CD14-positive monocyte (primary cell): ENCODE measurements at regions of chr6 and their contacts with region 1.

Region 1: GRCh38 chr6:132715204-132715603 is 1.3 kb upstream of the VNN1 start:
- DNase-seq: peak in 2 of 3 donors; percentile 9 to 17
- H3K4me3 ChIP-seq: no peak overlapping the region
- H3K4me3 Mint-ChIP-seq: no peak overlapping the region
- H3K27ac ChIP-seq: peak overlapping the region in 1 of 2 donors; percentile 40
- H3K27ac Mint-ChIP-seq: peak overlapping the region; percentile 60 to 98 (median 77)
- H3K4me1 ChIP-seq: peaks cover 51 to 57% of the 10 kb centered on the region in 2 donors
- H3K4me1 Mint-ChIP-seq: peaks cover 53% of the 10 kb centered on the region
- H3K27me3 ChIP-seq: no peaks in the 10 kb centered on the region
- H3K27me3 Mint-ChIP-seq: peaks cover 0 to 6% (median 2%) of the 10 kb centered on the region in 3 donors
- CTCF ChIP-seq: no peak

Region 2: DNA sequence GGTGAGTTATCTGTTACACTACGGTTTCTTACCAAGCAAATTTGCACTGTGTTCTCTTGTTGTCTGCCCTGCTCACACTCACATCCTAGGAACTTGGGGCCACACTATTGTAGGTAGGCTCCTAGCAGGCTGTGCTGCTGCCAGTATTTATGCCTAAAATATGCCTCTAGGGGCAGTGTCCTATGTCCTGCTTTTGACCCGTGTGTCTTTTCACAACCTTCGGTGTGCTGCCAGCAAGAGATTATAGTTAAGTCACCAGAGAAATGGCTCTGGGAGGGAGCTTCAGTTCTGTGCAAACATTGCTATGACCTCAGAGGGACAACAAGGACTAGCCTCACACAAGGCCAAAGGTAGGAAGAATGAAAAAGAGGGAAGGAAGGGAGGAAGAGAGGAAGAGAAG is 116.7 kb before region 1 on chr6:
- intact Hi-C with region 1: no loop called
- DNase-seq: peak; percentile 3 to 17 (median 6)
- H3K4me3 ChIP-seq: no peak overlapping the region
- H3K4me3 Mint-ChIP-seq: no peak overlapping the region
- H3K27ac ChIP-seq: no peak overlapping the region
- H3K27ac Mint-ChIP-seq: no peak overlapping the region
- H3K4me1 ChIP-seq: peaks cover 0 to under 1% of the 10 kb centered on the region in 2 donors
- H3K4me1 Mint-ChIP-seq: peaks cover 5% of the 10 kb centered on the region
- H3K27me3 ChIP-seq: no peaks in the 10 kb centered on the region
- H3K27me3 Mint-ChIP-seq: peaks cover 1 to 2% (median 1%) of the 10 kb centered on the region in 3 donors
- CTCF ChIP-seq: peak; percentile 45

Region 3: GRCh38 chr6:132675749-132676148 is 39.5 kb before region 1 on chr6:
- intact Hi-C with region 1: loop called in 1 of 2 experiments (anchors 5 kb)
- DNase-seq: peak; percentile 60 to 72 (median 67)
- H3K4me3 ChIP-seq: peak overlapping the region in 1 of 3 experiments; percentile 4
- H3K4me3 Mint-ChIP-seq: no peak overlapping the region
- H3K27ac ChIP-seq: peak overlapping the region in 1 of 2 donors; percentile 6
- H3K27ac Mint-ChIP-seq: peak overlapping the region in 3 of 7 donors; percentile 10 to 17 (median 12)
- H3K4me1 ChIP-seq: peaks cover 23 to 33% of the 10 kb centered on the region in 2 donors
- H3K4me1 Mint-ChIP-seq: peaks cover 32% of the 10 kb centered on the region
- H3K27me3 ChIP-seq: no peaks in the 10 kb centered on the region
- H3K27me3 Mint-ChIP-seq: peaks cover 0 to 1% (median 0%) of the 10 kb centered on the region in 3 donors
- CTCF ChIP-seq: no peak

Region 4: DNA sequence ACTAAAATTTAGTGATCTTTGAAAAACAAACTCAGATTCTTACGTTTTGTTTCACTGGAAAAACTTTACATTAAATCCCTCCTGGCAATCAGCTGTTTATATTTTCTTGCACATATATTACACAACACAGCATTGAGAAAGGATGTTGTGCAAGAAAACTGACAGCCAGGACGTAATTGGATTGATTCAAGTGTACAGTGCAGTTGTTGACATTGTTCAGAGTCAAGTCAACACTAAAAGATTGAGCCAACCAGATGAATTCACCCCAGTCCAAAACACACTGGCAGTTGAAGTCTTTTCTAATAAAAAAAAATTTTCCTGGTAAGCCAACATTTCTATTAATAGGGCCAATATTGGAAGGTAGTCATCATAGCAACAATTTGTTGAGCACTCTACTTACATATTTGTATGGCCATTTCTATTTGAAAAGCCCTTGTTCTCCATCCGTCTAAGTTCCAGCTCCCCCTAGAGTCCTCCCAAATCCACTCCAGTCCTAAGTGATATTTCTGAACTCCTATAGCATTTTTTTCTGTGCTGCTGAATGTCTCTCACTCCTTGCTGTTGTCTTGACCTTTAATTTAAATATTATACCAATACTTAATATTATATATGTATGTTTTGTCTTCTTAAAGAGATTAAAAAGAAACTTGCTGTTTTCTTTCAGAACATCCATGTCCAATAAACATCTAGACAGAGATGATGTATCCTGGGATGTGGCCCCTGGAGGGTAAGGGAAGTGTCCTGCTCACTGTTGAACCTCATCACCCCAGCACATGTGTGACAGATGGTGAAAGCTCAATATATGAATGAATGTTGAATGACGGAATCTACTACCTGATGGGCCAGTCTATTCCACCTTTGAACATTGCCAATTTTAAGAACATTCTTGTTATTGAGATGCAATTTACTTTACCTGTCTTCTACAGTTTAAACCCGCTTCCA is 19.8 kb after region 1 on chr6:
- intact Hi-C with region 1: loop called in 1 of 2 experiments (anchors 2 kb)
- DNase-seq: peak; percentile 75 to 83 (median 82)
- H3K4me3 ChIP-seq: peak overlapping the region; percentile 42 to 72 (median 44)
- H3K4me3 Mint-ChIP-seq: peak overlapping the region in 1 of 2 donors; percentile 81
- H3K27ac ChIP-seq: peak overlapping the region; percentile 46 to 89
- H3K27ac Mint-ChIP-seq: peak overlapping the region; percentile 20 to 95 (median 90)
- H3K4me1 ChIP-seq: peaks cover 56 to 80% of the 10 kb centered on the region in 2 donors
- H3K4me1 Mint-ChIP-seq: peaks cover 62% of the 10 kb centered on the region
- H3K27me3 ChIP-seq: no peaks in the 10 kb centered on the region
- H3K27me3 Mint-ChIP-seq: peaks cover 0 to 2% (median 0%) of the 10 kb centered on the region in 3 donors
- CTCF ChIP-seq: no peak

Region 5: GRCh38 chr6:132749111-132749510 is 33.9 kb after region 1 on chr6:
- intact Hi-C with region 1: loop called in 1 of 2 experiments (anchors 5 kb)
- DNase-seq: peak; percentile 73 to 83 (median 82)
- H3K4me3 ChIP-seq: peak overlapping the region in 1 of 3 experiments; percentile 35
- H3K4me3 Mint-ChIP-seq: peak overlapping the region; percentile 16 to 59
- H3K27ac ChIP-seq: peak overlapping the region; percentile 79 to 88
- H3K27ac Mint-ChIP-seq: peak overlapping the region; percentile 89 to 98 (median 97)
- H3K4me1 ChIP-seq: peaks cover 86 to 100% of the 10 kb centered on the region in 2 donors
- H3K4me1 Mint-ChIP-seq: peaks cover 86% of the 10 kb centered on the region
- H3K27me3 ChIP-seq: no peaks in the 10 kb centered on the region
- H3K27me3 Mint-ChIP-seq: no peaks in the 10 kb centered on the region
- CTCF ChIP-seq: no peak

Region 6: DNA sequence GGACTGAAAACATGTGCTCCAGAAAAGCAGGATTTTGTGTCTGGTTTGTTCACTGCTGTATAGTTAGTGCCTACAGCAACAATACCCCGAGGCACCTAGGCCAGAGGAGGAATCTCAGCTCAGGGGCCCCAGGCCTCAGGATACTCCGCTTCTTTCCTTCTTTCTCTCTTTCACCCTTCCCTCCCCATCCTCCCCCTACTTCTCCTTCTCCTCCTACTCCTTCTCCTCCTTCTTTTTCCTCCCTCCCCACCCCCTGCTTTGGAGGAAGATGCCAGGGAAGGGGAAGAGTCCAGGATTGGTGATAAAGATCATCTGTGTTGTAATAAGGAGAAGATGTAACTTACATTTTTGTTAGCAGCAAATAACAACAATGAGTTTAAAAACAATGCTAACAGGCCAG is 43.6 kb after region 1 on chr6:
- intact Hi-C with region 1: loop called in 1 of 2 experiments (anchors 5 kb)
- DNase-seq: no peak
- H3K4me3 ChIP-seq: no peak overlapping the region
- H3K4me3 Mint-ChIP-seq: peak overlapping the region in 1 of 2 donors; percentile 46
- H3K27ac ChIP-seq: peak overlapping the region; percentile 31 to 66
- H3K27ac Mint-ChIP-seq: peak overlapping the region in 3 of 7 donors; percentile 40 to 84 (median 80)
- H3K4me1 ChIP-seq: peaks cover 69 to 95% of the 10 kb centered on the region in 2 donors
- H3K4me1 Mint-ChIP-seq: peaks cover 50% of the 10 kb centered on the region
- H3K27me3 ChIP-seq: no peaks in the 10 kb centered on the region
- H3K27me3 Mint-ChIP-seq: peaks cover 0 to 2% (median 0%) of the 10 kb centered on the region in 3 donors
- CTCF ChIP-seq: no peak